Dorsolateral prefrontal cortex (tissue), 120 donors: ENCODE measurements at regions of chr17 and their contacts with region 1.

Region 1: GRCh38 chr17:41738077-41738735 is 3.8 kb upstream of the HAP1 start:
- DNase-seq: peak; percentile 68 to 88 (median 81)
- H3K4me3 ChIP-seq: peak overlapping the region in 1 of 59 donors; percentile 7
- H3K27ac ChIP-seq: no peak overlapping the region
- H3K27me3 ChIP-seq: peaks cover 0 to 46% (median 22%) of the 10 kb centered on the region in 45 donors
- CTCF ChIP-seq: peak; percentile 88 to 100 (median 99)

Region 2: DNA sequence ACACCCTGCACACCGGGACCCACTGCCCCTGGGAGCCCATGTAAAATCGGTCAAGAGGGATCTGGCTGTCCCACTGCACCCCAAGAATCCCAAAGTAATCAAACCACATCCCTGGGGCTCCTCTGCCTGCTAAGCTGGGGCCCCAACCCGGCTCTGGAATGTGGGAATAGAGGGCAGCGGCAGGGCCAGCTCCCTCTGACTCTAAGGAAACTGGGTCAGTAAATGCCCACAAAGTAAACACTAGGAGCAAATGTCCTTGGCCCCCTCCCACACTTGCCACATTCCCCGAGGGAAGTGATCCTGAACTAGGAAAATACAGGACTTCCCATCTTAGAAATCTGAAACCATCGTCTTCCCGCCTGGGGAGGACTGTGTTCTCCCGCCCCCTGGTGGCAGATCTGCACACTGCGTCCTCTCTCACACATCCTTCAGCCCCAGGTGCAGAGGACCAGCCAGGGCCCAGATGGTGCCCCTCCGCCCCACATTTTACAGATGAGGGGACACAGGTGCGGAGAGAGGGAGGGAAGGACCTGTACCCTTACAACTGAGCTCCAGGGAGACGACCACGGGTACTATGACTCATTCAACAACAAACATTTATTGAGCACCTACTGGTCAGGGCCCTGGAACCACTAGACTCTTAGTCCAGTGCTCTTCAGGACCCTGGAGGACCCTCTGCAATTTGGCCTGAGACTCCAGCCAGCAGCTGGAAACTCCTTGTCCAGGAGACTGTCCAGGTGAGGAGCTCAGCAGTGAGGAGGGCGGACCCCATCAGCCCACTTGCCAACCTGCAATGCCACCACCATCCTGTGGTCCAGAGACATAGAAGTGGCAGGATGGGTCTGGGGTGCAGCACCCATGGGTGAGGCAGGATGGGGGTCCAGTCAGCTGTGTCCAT is 63.4 kb after region 1 on chr17:
- intact Hi-C with region 1: loop called (anchors 1 kb)
- DNase-seq: peak; percentile 78 to 90 (median 86)
- H3K4me3 ChIP-seq: peak overlapping the region in 15 of 59 donors; percentile 13 to 44 (median 28)
- H3K27ac ChIP-seq: peak overlapping the region in 1 of 59 donors; percentile 15
- H3K27me3 ChIP-seq: no peaks in the 10 kb centered on the region
- CTCF ChIP-seq: peak; percentile 94 to 99 (median 99)

Region 3: DNA sequence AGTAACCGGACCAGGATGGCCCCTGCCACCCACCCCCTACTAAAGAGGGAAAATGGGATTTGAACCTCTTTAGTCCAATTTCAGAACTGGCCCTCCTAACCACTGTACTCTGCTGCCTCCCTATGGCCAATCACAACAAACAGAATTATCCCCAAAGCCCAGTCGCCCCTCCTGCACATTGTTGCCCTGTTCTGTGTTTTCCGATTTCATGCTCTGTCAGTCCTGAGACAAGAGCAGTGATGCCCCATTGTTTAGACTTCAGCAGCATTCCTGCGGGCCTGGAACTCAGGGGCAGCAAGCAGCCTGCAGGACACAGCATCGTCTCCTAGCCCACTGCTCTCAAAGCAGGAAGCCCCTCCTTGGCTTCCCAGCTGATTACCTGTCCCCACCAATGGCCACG is 147.5 kb after region 1 on chr17:
- intact Hi-C with region 1: loop called in 1 of 2 experiments (anchors 2 kb)
- DNase-seq: no peak
- H3K4me3 ChIP-seq: no peak overlapping the region
- H3K27ac ChIP-seq: peak overlapping the region in 2 of 59 donors; percentile 42 to 65
- H3K27me3 ChIP-seq: no peaks in the 10 kb centered on the region
- CTCF ChIP-seq: peak in 49 of 56 donors; percentile 16 to 65 (median 40)